Activated CD4-positive, alpha-beta T cell treated with anti-CD3 and anti-CD28 coated beads for 36 hours (primary cell): ENCODE measurements at regions of chr2 and their contacts with region 1.

Region 1: DNA sequence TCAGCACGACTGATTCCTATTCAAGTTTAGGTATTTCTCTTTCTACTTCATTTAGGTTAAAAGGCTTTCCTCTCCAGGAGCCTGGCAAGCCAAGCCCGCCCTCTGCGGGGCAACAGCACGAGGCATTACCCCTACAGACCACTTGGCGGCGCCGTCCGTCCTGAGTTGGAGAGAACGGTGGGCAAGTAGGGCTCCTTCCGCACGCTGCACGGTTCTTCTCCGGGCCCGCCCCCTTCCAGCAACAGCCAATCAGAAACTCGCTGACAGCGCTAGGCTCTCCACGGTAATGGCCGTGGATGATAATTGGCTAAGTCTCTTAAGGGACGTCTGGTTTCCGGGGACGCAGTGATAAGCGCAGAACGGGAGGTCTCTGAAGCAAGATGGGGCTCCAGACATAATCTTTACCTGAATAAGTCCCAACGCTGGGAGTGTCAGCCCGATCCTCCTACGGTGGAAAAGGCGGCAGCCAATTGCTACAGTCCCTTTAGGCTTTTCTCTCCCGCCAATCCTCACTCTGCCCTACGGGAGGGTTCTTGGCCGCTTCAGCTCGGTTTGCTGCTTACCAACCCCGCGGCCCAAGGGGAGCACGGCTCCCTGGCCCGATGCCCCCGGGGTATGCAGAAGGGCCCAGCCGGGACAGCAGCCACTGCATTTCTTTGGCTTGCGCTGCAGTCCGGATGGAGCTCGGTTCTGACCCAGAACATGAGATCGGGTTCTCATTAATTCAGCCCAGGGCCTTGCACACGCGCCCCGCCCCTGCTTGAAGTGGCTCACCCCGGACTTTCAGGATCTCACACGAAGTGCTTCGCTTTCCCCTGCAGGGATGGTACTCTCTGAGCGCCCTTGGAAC is 206.9 kb upstream of the PKDCC start:
- DNase-seq: peak; percentile 99
- ATAC-seq: peak; percentile 100
- H3K4me3 Mint-ChIP-seq: peak overlapping the region; percentile 84
- H3K27ac Mint-ChIP-seq: peak overlapping the region; percentile 92
- H3K4me1 Mint-ChIP-seq: peaks cover 10% of the 10 kb centered on the region
- H3K27me3 Mint-ChIP-seq: peaks cover 16% of the 10 kb centered on the region

Region 2: GRCh38 chr2:40751981-40752380 is 1088.9 kb before region 1 on chr2:
- CTCF ChIA-PET with region 1: no interaction called
- POLR2A ChIA-PET with region 1: no interaction called
- intact Hi-C with region 1: no loop called
- DNase-seq: no peak
- ATAC-seq: no peak
- H3K4me3 Mint-ChIP-seq: no peak overlapping the region
- H3K27ac Mint-ChIP-seq: no peak overlapping the region
- H3K4me1 Mint-ChIP-seq: no peaks in the 10 kb centered on the region
- H3K27me3 Mint-ChIP-seq: no peaks in the 10 kb centered on the region

Region 3: DNA sequence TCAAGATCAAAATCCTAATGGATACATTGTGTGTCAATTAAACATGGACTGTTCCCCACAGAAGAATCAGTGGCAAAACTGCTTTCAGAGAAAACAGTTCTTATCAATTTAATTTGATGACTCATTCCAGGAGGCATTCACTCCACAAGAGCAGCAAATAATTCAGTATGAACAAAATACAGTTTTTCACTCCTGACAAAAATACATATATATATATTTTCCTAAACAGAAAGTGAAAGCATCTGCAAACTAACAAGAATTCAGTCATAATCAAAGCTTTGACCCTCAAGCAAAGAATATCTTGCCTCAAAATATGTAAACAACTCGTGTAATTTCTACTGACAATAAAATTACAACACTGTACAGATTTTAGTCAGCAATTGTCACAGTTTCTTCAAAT is 703.9 kb before region 1 on chr2:
- CTCF ChIA-PET with region 1: no interaction called
- POLR2A ChIA-PET with region 1: no interaction called
- intact Hi-C with region 1: no loop called
- DNase-seq: no peak
- ATAC-seq: no peak
- H3K4me3 Mint-ChIP-seq: no peak overlapping the region
- H3K27ac Mint-ChIP-seq: no peak overlapping the region
- H3K4me1 Mint-ChIP-seq: no peaks in the 10 kb centered on the region
- H3K27me3 Mint-ChIP-seq: no peaks in the 10 kb centered on the region

Region 4: GRCh38 chr2:41853427-41854216 is 12.7 kb after region 1 on chr2:
- CTCF ChIA-PET with region 1: interaction called, 13 read pairs
- POLR2A ChIA-PET with region 1: no interaction called
- intact Hi-C with region 1: loop called (anchors 1 to 2 kb)
- DNase-seq: peak; percentile 28
- ATAC-seq: peak; percentile 50
- H3K4me3 Mint-ChIP-seq: no peak overlapping the region
- H3K27ac Mint-ChIP-seq: peak overlapping the region; percentile 47
- H3K4me1 Mint-ChIP-seq: peaks cover 17% of the 10 kb centered on the region
- H3K27me3 Mint-ChIP-seq: peaks cover 10% of the 10 kb centered on the region

Region 5: DNA sequence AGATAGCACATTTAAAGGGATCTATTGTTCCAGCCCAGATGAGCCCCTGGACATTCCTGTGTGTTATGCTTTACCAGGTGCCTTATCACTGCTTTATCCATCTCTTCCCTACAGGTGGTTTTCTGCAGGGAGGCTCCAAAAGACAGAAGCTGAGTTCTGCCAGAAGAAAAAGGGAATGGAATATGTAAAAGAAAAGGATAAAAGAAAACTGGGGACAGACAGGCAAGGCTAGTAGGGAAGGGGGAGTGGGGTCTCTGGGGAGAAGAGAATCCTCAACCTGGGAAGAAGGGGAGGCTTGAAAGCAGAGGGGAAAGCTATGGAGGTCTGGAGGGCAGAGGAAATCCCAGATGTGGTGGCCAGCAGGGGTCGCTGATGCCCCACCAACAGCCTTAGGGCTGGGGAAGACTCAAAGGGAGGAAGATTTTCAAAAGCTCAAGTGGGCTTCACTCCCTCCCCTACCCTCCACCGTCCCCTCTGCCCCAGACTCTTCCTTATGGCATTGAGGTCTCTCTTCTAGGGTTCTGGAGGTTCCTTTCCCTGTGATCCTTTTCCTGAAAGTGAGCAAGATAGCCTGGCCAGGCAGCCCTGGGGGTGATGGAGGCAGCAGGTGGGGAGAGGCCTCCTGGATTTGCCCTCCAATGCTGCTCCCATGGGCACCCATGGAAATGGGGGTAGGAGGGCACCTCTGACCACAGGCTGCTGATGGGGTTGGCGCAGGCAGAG is 28.8 kb after region 1 on chr2:
- CTCF ChIA-PET with region 1: interaction called, 17 read pairs
- POLR2A ChIA-PET with region 1: no interaction called
- intact Hi-C with region 1: loop called (anchors 1 kb)
- DNase-seq: peak; percentile 86
- ATAC-seq: peak; percentile 85
- H3K4me3 Mint-ChIP-seq: no peak overlapping the region
- H3K27ac Mint-ChIP-seq: no peak overlapping the region
- H3K4me1 Mint-ChIP-seq: peaks cover 6% of the 10 kb centered on the region
- H3K27me3 Mint-ChIP-seq: peaks cover 9% of the 10 kb centered on the region

Region 6: GRCh38 chr2:42183775-42184174 is 342.8 kb after region 1 on chr2:
- CTCF ChIA-PET with region 1: no interaction called
- POLR2A ChIA-PET with region 1: no interaction called
- intact Hi-C with region 1: loop called in 1 of 2 experiments (anchors 5 kb)
- DNase-seq: no peak
- ATAC-seq: no peak
- H3K4me3 Mint-ChIP-seq: no peak overlapping the region
- H3K27ac Mint-ChIP-seq: no peak overlapping the region
- H3K4me1 Mint-ChIP-seq: peaks cover 69% of the 10 kb centered on the region
- H3K27me3 Mint-ChIP-seq: no peaks in the 10 kb centered on the region

Region 7: DNA sequence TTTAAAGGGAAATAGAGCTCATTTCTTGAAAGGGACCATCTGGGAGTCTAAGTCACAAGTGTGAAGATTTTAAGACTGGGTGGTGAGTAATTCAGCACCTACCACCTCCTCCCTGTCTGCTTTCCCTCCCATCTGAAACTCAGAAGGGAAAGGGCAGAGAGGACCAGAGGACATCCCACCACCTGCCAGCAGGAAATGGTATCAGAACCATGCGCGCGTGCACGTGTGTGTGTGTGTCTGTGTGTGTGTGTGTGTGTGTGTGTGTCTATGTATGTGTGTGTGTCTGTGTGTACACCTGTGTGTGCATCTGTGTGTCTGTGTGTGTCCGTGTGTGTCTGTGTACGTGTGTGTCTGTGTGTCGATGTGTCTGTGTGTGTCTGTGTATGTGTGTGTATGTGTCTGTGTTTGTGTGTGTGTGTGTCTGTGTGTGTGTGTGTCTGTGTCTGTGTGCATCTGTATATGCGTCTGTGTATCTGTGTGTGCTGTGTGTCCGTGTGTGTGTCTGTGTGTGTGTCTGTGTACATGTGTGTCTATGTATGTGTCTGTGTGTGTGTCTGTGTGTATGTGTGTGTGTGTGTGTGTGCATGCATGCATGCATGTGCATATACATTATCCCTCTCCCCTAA is 1308.7 kb after region 1 on chr2:
- CTCF ChIA-PET with region 1: no interaction called
- POLR2A ChIA-PET with region 1: no interaction called
- intact Hi-C with region 1: loop called in 1 of 2 experiments (anchors 5 kb)
- DNase-seq: peak; percentile 86
- ATAC-seq: peak; percentile 97
- H3K4me3 Mint-ChIP-seq: peak overlapping the region; percentile 49
- H3K27ac Mint-ChIP-seq: peak overlapping the region; percentile 97
- H3K4me1 Mint-ChIP-seq: peaks cover 67% of the 10 kb centered on the region
- H3K27me3 Mint-ChIP-seq: no peaks in the 10 kb centered on the region